WTC11 (cell line): ENCODE measurements at regions of chr3 and their contacts with region 1.

Region 1: DNA sequence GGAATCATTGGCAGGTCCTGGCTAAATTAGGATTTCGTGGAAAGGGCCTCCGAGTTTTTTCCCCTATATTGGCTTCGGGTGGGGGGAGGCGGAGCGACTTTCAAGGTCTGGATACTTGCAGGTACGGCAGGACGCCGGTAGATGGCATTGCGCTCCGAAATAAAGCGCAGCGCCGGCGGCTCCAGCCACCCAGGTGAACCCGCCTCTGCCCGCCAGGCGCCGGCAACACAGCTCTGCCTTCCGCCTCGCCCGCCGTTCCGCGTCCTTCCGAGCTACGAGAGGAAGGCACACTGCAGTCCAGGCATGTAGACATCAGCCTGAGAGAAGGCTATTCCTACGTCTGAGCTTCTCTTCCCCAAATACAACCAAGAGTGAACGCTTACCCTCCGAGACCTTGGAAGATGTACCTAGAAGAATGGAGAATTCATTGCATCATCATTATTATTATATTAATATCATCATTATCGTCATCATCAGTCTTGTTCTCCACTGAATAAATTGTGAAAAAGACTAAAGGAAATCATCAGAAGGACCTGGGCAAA is 514.1 kb downstream of the MECOM start:
- DNase-seq: peak; percentile 89
- ATAC-seq: peak; percentile 71
- H3K4me3 Mint-ChIP-seq: peak overlapping the region; percentile 84
- H3K27ac Mint-ChIP-seq: no peak overlapping the region
- H3K4me1 Mint-ChIP-seq: peaks cover 46% of the 10 kb centered on the region
- H3K27me3 Mint-ChIP-seq: peaks cover 55% of the 10 kb centered on the region
- CTCF ChIP-seq: peak; percentile 72

Region 2: GRCh38 chr3:169131695-169132464 is 17.5 kb before region 1 on chr3:
- CTCF ChIA-PET with region 1: interaction called, 16 read pairs
- POLR2A ChIA-PET with region 1: no interaction called
- DNase-seq: no peak
- ATAC-seq: no peak
- H3K4me3 Mint-ChIP-seq: no peak overlapping the region
- H3K27ac Mint-ChIP-seq: no peak overlapping the region; the same call in 1 of the 2 replicates
- H3K4me1 Mint-ChIP-seq: peaks cover 5% of the 10 kb centered on the region; the same call in 1 of the 2 replicates
- H3K27me3 Mint-ChIP-seq: no peaks in the 10 kb centered on the region
- CTCF ChIP-seq: no peak

Region 3: DNA sequence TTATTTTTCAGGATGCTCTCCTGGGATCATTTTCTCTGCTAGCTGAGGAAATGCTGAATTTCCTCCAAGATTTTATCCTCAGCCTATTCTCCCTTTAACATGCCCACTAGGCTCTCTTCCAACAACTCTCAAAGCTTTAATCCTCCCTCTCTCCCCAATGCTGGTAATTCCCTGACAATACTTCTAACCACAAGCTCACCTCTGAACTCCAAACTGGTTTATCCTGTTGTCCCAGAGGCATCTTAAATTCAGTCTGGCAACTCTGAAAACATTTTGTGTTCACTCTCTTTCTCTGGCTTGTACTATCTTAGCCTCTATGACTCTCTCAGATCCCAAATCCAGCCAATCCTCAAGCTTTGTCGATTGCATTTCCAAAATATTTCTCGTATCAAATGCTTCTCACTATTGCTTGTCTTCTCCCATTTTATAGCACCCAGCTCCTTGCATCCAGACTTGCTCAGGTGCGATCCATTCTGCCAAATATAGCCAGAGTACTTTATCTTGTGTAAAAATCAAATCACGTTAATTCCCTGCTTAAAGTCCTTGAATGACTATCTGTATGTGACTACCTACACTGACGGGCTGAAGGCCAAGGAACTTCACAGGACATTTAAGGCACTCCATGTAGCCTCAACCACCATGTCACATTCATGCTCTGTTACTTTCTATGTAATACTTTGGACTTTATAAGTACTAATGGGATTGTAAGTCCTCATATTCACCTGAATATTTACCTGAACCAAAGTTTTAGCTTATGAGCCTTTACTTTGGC is 24.0 kb after region 1 on chr3:
- CTCF ChIA-PET with region 1: interaction called, 14 read pairs
- POLR2A ChIA-PET with region 1: no interaction called
- DNase-seq: no peak
- ATAC-seq: peak; percentile 89
- H3K4me3 Mint-ChIP-seq: no peak overlapping the region
- H3K27ac Mint-ChIP-seq: peak overlapping the region; percentile 69
- H3K4me1 Mint-ChIP-seq: peaks cover 11% of the 10 kb centered on the region
- H3K27me3 Mint-ChIP-seq: no peaks in the 10 kb centered on the region
- CTCF ChIP-seq: no peak

Region 4: DNA sequence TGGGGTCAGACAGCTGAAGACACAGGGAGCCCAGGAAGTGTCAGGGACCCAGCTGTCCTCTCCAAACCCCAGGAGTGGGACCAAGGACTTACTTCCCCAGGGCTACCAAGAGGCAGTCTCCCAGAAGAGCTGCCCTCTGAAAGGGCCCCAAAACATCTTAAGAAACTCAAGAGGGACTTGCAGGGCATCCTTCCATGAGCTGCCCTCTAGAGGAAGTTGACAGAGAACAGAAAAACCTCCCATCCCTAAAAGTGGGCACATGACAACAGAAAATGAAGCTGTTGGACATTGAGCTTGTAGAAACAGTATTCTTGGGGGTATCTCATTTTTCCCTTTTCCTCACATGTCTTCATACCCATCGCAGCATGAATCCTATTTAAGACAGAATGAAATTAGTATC is 455.1 kb after region 1 on chr3:
- CTCF ChIA-PET with region 1: interaction called, 21 read pairs
- POLR2A ChIA-PET with region 1: no interaction called
- DNase-seq: no peak
- ATAC-seq: peak; percentile 86
- H3K4me3 Mint-ChIP-seq: peak overlapping the region; percentile 48
- H3K27ac Mint-ChIP-seq: no peak overlapping the region
- H3K4me1 Mint-ChIP-seq: peaks cover 17% of the 10 kb centered on the region
- H3K27me3 Mint-ChIP-seq: no peaks in the 10 kb centered on the region
- CTCF ChIP-seq: no peak

Region 5: DNA sequence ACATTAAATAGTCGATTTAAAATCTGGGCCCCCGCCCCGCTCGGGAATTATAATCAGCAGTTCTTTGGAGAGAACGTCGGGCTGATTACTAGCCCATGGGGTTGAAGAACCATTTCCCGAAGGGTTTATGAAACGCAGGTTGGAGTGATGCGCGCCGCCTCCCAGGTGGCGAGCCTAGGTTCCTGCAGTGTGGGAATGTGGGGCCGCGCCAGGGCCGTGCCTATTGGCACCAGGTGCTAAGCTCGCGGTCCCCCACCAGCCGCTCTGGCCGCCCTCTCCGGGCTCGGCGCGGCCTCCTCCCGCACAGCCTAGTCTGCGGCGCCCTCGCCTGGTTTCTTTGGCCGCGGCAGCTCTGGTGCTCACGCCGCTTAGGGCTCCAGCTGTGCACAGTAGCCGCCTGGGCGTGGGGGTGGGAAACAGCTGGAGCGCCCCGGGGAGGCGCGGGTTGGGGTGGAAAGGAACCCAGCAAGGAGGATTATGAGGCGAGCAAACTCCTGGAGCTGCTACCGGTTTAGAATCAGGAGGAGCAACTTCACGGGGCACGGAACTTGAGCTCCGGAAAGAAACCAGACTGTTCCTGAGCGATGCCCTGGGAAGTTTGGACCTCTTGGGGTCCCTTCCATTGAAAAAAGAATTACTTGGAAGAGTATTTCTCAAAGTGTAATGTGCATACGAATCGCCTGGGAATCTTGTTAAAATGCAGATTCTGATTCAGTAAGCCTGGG is 519.7 kb after region 1 on chr3:
- CTCF ChIA-PET with region 1: interaction called, 142 read pairs
- POLR2A ChIA-PET with region 1: interaction called, 3 read pairs
- DNase-seq: peak; percentile 86
- ATAC-seq: peak; percentile 83
- H3K4me3 Mint-ChIP-seq: peak overlapping the region; percentile 82
- H3K27ac Mint-ChIP-seq: peak overlapping the region; percentile 54; the same call in 1 of the 2 replicates
- H3K4me1 Mint-ChIP-seq: peaks cover 63% of the 10 kb centered on the region
- H3K27me3 Mint-ChIP-seq: peaks cover 62% of the 10 kb centered on the region
- CTCF ChIP-seq: peak; percentile 41; the same call in 1 of the 2 replicates